PC-9 (cell line): ENCODE measurements at regions of chr10 and their contacts with region 1.

Region 1: GRCh38 chr10:43854007-43854406 is 205.3 kb upstream of the ZNF32 start:
- DNase-seq: peak; percentile 82 to 84
- H3K4me3 ChIP-seq: no peak overlapping the region
- H3K27ac ChIP-seq: no peak overlapping the region
- H3K4me1 ChIP-seq: peaks cover 10% of the 10 kb centered on the region; the same call in 1 of the 2 replicates
- H3K27me3 ChIP-seq: peaks cover 9% of the 10 kb centered on the region; the same call in 1 of the 2 replicates
- CTCF ChIP-seq: no peak

Region 2: GRCh38 chr10:42998481-42999384 is 855.3 kb before region 1 on chr10:
- CTCF ChIA-PET with region 1: no interaction called
- POLR2A ChIA-PET with region 1: no interaction called
- intact Hi-C with region 1: no loop called
- DNase-seq: no peak
- H3K4me3 ChIP-seq: no peak overlapping the region
- H3K27ac ChIP-seq: no peak overlapping the region
- H3K4me1 ChIP-seq: no peaks in the 10 kb centered on the region
- H3K27me3 ChIP-seq: no peaks in the 10 kb centered on the region
- CTCF ChIP-seq: no peak

Region 3: GRCh38 chr10:43863859-43864591 is 10.0 kb after region 1 on chr10:
- CTCF ChIA-PET with region 1: interaction called, 5 read pairs
- POLR2A ChIA-PET with region 1: interaction called, 6 read pairs
- intact Hi-C with region 1: loop called (anchors 1 kb)
- DNase-seq: peak; percentile 61 to 77
- H3K4me3 ChIP-seq: no peak overlapping the region
- H3K27ac ChIP-seq: no peak overlapping the region
- H3K4me1 ChIP-seq: no peaks in the 10 kb centered on the region
- H3K27me3 ChIP-seq: peaks cover 14% of the 10 kb centered on the region
- CTCF ChIP-seq: no peak

Region 4: GRCh38 chr10:44261710-44262455 is 407.9 kb after region 1 on chr10:
- CTCF ChIA-PET with region 1: no interaction called
- POLR2A ChIA-PET with region 1: no interaction called
- intact Hi-C with region 1: no loop called
- DNase-seq: no peak
- H3K4me3 ChIP-seq: no peak overlapping the region
- H3K27ac ChIP-seq: no peak overlapping the region
- H3K4me1 ChIP-seq: no peaks in the 10 kb centered on the region
- H3K27me3 ChIP-seq: peaks cover 23% of the 10 kb centered on the region; the same call in 1 of the 2 replicates
- CTCF ChIP-seq: no peak